H1 (cell line): ENCODE measurements at regions of chr7 and their contacts with region 1.

Region 1: GRCh38 chr7:31811650-31812461 is 124.8 kb downstream of the PPP1R17 start:
- DNase-seq: no peak
- H3K4me3 ChIP-seq: no peak overlapping the region
- H3K27ac ChIP-seq: no peak overlapping the region
- H3K4me1 ChIP-seq: no peaks in the 10 kb centered on the region
- H3K27me3 ChIP-seq: no peaks in the 10 kb centered on the region
- CTCF ChIP-seq: no peak
- EP300 ChIP-seq: no peak
- POLR2A ChIP-seq: no peak
- RAD21 ChIP-seq: no peak

Region 2: GRCh38 chr7:31539676-31540075 is 272.2 kb before region 1 on chr7:
- CTCF ChIA-PET with region 1: no interaction called
- POLR2A ChIA-PET with region 1: no interaction called
- DNase-seq: no peak
- H3K4me3 ChIP-seq: no peak overlapping the region
- H3K27ac ChIP-seq: no peak overlapping the region
- H3K4me1 ChIP-seq: no peaks in the 10 kb centered on the region
- H3K27me3 ChIP-seq: no peaks in the 10 kb centered on the region
- CTCF ChIP-seq: no peak
- EP300 ChIP-seq: no peak
- POLR2A ChIP-seq: no peak
- RAD21 ChIP-seq: no peak

Region 3: GRCh38 chr7:31775556-31775955 is 36.3 kb before region 1 on chr7:
- CTCF ChIA-PET with region 1: no interaction called
- POLR2A ChIA-PET with region 1: no interaction called
- DNase-seq: no peak
- H3K4me3 ChIP-seq: no peak overlapping the region
- H3K27ac ChIP-seq: no peak overlapping the region
- H3K4me1 ChIP-seq: no peaks in the 10 kb centered on the region
- H3K27me3 ChIP-seq: peaks cover 49 to 90% (median 80%) of the 10 kb centered on the region in 4 experiments
- CTCF ChIP-seq: no peak
- EP300 ChIP-seq: no peak
- POLR2A ChIP-seq: no peak
- RAD21 ChIP-seq: no peak

Region 4: DNA sequence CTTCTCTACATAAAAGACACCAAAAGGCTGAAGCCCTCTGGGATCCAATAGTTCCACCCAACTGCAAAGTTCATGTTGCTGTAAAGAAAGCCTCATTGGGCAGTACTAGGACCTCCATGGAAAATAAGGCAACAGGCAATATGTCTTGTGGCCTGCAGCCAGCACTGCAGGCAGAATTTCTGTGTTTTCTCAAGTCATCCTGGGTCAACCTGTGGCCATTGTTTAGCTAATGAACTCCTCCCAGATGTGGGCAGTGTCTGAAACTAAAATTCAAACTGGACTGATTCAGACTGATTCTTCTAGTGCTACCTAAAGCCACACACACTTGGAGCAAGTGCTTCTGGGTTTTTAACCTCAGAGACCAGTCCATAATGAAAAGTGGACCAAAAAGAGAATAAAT is 16.7 kb after region 1 on chr7:
- CTCF ChIA-PET with region 1: interaction called, 34 read pairs
- POLR2A ChIA-PET with region 1: no interaction called
- DNase-seq: no peak
- H3K4me3 ChIP-seq: no peak overlapping the region
- H3K27ac ChIP-seq: no peak overlapping the region
- H3K4me1 ChIP-seq: peaks cover 0 to 5% (median 0%) of the 10 kb centered on the region in 4 experiments; a peak in 1 of 7 replicates
- H3K27me3 ChIP-seq: no peaks in the 10 kb centered on the region
- CTCF ChIP-seq: no peak
- EP300 ChIP-seq: no peak
- POLR2A ChIP-seq: no peak
- RAD21 ChIP-seq: no peak

Region 5: DNA sequence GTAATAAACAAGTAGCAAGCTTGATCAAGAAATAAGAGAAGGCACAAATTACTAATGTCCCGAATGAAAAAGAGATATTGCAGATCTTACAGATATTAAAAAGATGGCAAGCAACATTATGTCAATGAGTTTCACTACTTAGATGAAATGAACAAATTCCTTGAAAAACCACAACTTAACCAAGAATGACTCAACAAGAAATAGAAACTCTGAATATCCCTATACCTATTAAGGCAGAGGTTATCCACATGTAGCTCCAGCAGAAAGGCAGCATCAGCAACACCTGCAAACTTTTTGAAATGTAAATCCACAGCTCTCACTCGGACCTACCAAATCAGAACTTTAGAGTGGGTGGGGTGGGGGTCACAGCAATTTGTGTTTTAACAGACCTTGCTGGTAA is 224.7 kb after region 1 on chr7:
- CTCF ChIA-PET with region 1: interaction called, 17 read pairs
- POLR2A ChIA-PET with region 1: no interaction called
- DNase-seq: no peak
- H3K4me3 ChIP-seq: no peak overlapping the region
- H3K27ac ChIP-seq: no peak overlapping the region
- H3K4me1 ChIP-seq: no peaks in the 10 kb centered on the region
- H3K27me3 ChIP-seq: no peaks in the 10 kb centered on the region
- CTCF ChIP-seq: no peak
- EP300 ChIP-seq: no peak
- POLR2A ChIP-seq: no peak
- RAD21 ChIP-seq: no peak

Region 6: GRCh38 chr7:32062150-32062549 is 250.3 kb after region 1 on chr7:
- CTCF ChIA-PET with region 1: interaction called, 41 read pairs
- POLR2A ChIA-PET with region 1: no interaction called
- DNase-seq: peak in 1 of 2 experiments; percentile 86
- H3K4me3 ChIP-seq: no peak overlapping the region
- H3K27ac ChIP-seq: no peak overlapping the region
- H3K4me1 ChIP-seq: peaks cover 0 to 7% (median 5%) of the 10 kb centered on the region in 4 experiments; a peak in 4 of 7 replicates
- H3K27me3 ChIP-seq: peaks cover 0 to 2% (median under 1%) of the 10 kb centered on the region in 4 experiments; a peak in 2 of 7 replicates
- CTCF ChIP-seq: peak; percentile 73 to 88 (median 82)
- EP300 ChIP-seq: no peak
- POLR2A ChIP-seq: no peak
- RAD21 ChIP-seq: peak; percentile 64 to 75

Region 7: GRCh38 chr7:32068411-32069101 is 256.7 kb after region 1 on chr7:
- CTCF ChIA-PET with region 1: interaction called, 41 read pairs
- POLR2A ChIA-PET with region 1: no interaction called
- DNase-seq: no peak
- H3K4me3 ChIP-seq: no peak overlapping the region
- H3K27ac ChIP-seq: no peak overlapping the region
- H3K4me1 ChIP-seq: no peaks in the 10 kb centered on the region; a peak in 1 of 7 replicates
- H3K27me3 ChIP-seq: peaks cover 28 to 52% (median 44%) of the 10 kb centered on the region in 4 experiments
- CTCF ChIP-seq: no peak
- EP300 ChIP-seq: no peak
- POLR2A ChIP-seq: no peak
- RAD21 ChIP-seq: no peak